Activated CD4-positive, alpha-beta memory T cell treated with anti-CD3 and anti-CD28 coated beads for 36 hours (primary cell): ENCODE measurements at regions of chr19 and their contacts with region 1.

Region 1: DNA sequence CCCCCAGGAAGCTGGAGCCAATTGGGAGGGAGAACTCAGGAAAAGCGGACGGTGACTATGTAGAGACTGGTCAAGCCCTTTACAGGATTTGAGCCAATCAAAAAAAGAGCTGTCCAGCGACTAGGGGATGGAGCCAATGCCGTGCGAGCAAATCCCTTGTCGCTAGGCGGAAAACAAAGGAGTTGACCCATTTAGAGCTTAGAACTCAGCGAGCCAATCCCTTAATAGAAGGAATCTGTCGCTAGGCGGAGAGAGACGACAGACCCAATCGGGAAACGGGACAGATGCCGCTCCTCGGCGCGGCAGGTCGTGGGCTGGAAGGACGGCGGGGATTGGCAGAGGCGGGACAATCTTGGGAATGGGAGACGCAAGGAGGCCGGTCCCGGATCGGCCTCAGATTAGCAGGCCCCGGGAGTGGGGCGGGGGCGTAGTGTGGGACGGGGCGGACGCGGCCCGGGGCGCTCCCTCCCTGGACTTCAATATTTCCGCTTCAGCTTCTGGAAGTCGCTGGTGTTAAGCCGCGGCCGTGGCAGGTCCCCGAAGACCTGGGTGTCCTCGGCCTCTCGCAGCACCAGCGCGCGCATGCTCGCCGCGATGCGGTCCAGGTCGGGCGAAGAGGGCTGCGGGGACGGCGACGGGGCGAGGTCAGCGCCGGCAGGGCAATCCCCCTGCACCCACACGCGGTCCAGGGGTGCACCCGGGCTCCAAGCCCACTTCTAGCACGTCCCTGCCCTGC is 2.2 kb upstream of the PNKP start:
- DNase-seq: peak; percentile 96
- H3K4me3 Mint-ChIP-seq: no peak overlapping the region
- H3K27ac Mint-ChIP-seq: no peak overlapping the region
- H3K4me1 Mint-ChIP-seq: peaks cover 50% of the 10 kb centered on the region
- H3K27me3 Mint-ChIP-seq: no peaks in the 10 kb centered on the region

Region 2: GRCh38 chr19:49590071-49590970 is 279.3 kb before region 1 on chr19:
- CTCF ChIA-PET with region 1: no interaction called
- POLR2A ChIA-PET with region 1: no interaction called
- intact Hi-C with region 1: loop called (anchors 5 kb)
- DNase-seq: peak; percentile 97
- H3K4me3 Mint-ChIP-seq: peak overlapping the region; percentile 80
- H3K27ac Mint-ChIP-seq: peak overlapping the region; percentile 91
- H3K4me1 Mint-ChIP-seq: peaks cover 32% of the 10 kb centered on the region
- H3K27me3 Mint-ChIP-seq: no peaks in the 10 kb centered on the region

Region 3: DNA sequence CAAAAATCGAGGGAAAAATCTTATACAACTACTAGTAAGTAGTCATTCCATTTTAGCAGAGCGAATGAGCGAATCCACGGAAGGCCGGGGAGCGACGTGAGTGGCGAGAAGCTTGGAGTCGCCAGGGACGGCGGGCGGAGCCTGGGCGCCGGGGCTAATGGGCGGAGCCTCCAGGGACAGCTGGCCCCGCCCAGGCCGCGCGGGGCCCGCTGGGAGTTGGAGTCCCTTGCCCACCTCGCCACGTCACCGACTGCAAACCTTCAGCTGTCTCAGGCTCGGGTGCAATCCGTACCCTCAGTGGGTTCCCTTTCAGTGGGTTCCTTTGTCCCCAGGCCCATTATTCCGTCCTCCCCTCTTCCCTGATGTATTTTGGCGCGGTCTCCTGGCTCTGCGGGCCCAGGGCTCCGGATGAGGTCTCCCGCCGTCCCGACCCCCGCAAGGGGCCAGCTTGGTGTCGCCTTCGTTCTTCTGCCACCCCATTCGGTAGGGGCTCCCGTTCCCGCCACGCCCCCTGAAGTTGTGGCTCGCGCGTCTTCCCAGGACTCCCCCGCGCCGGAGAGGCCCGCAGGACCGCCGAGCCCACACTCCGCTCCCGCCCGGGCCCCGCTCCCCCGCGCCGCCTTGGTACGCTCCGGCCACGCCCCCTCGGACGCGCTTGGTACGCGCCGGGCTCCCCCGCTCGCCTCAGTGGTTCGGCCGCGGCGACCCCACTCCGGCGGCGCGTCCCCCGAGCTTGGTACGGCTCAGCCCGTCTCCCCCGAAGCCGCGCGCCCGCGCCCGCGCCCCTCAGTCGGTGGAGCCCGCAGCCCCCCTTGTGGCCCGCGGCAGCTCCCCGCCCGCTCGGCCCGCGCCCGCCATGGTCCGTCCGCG is 18.9 kb before region 1 on chr19 and contains the start of gene PTOV1:
- CTCF ChIA-PET with region 1: interaction called, 11 read pairs
- POLR2A ChIA-PET with region 1: interaction called, 5 read pairs
- intact Hi-C with region 1: loop called (anchors 1 kb)
- DNase-seq: peak; percentile 93
- H3K4me3 Mint-ChIP-seq: peak within 1 kb of the TSS; percentile 86
- H3K27ac Mint-ChIP-seq: peak within 1 kb of the TSS; percentile 95
- H3K4me1 Mint-ChIP-seq: peaks cover 41% of the 10 kb centered on the region
- H3K27me3 Mint-ChIP-seq: no peaks in the 10 kb centered on the region
- total RNA-seq, gene PTOV1: 105 to 108 TPM

Region 4: GRCh38 chr19:50039968-50040367 is 170.4 kb after region 1 on chr19:
- CTCF ChIA-PET with region 1: no interaction called
- POLR2A ChIA-PET with region 1: no interaction called
- intact Hi-C with region 1: no loop called
- DNase-seq: no peak
- H3K4me3 Mint-ChIP-seq: no peak overlapping the region
- H3K27ac Mint-ChIP-seq: no peak overlapping the region
- H3K4me1 Mint-ChIP-seq: peaks cover 3% of the 10 kb centered on the region
- H3K27me3 Mint-ChIP-seq: no peaks in the 10 kb centered on the region